ENCODE measurements at regions of chr2 and their contacts with region 1.

Region 1: GRCh38 chr2:112749755-112750559 is 14.5 kb downstream of the CKAP2L start:
- DNase-seq: peak; percentile 75 to 89
- ATAC-seq: peak; percentile 93 to 98 (median 96)
- H3K4me3 ChIP-seq: no peak overlapping the region
- H3K4me3 Mint-ChIP-seq: peak overlapping the region; percentile 46
- H3K27ac ChIP-seq: peak overlapping the region; percentile 1
- H3K27ac Mint-ChIP-seq: peak overlapping the region; percentile 77 to 91
- H3K4me1 ChIP-seq: peaks cover 9% of the 10 kb centered on the region
- H3K4me1 Mint-ChIP-seq: peaks cover 10 to 21% of the 10 kb centered on the region in 2 donors
- H3K27me3 ChIP-seq: no peaks in the 10 kb centered on the region
- H3K27me3 Mint-ChIP-seq: no peaks in the 10 kb centered on the region
- CTCF ChIP-seq: peak; percentile 99

Region 2: DNA sequence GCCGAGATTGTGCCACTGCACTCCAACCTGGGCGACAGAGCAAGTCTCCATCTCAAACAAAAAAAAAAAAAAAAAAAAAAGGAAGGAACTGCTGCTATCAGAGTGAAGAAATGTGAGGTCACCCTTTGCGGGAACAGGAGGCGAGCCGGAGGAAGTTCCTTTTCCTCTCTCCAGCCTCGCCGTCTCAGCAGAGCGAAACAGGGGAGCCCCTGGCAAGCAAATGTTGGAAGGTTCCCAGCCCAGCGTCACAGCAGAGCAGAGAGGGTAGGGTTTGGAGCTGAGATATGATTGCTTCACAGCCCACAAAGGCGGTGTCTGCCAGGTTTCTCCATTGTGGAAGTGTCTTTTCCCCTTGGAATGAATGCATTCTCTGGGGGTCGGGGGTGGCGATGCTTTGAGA is 75.7 kb before region 1 on chr2:
- intact Hi-C with region 1: no loop called
- DNase-seq: no peak
- ATAC-seq: peak in 1 of 3 donors; percentile 66
- H3K4me3 ChIP-seq: no peak overlapping the region
- H3K4me3 Mint-ChIP-seq: no peak overlapping the region
- H3K27ac ChIP-seq: no peak overlapping the region
- H3K27ac Mint-ChIP-seq: peak overlapping the region in 1 of 2 donors; percentile 48
- H3K4me1 ChIP-seq: peaks cover 7% of the 10 kb centered on the region
- H3K4me1 Mint-ChIP-seq: peaks cover 6 to 10% of the 10 kb centered on the region in 2 donors
- H3K27me3 ChIP-seq: no peaks in the 10 kb centered on the region
- H3K27me3 Mint-ChIP-seq: no peaks in the 10 kb centered on the region
- CTCF ChIP-seq: no peak

Region 3: DNA sequence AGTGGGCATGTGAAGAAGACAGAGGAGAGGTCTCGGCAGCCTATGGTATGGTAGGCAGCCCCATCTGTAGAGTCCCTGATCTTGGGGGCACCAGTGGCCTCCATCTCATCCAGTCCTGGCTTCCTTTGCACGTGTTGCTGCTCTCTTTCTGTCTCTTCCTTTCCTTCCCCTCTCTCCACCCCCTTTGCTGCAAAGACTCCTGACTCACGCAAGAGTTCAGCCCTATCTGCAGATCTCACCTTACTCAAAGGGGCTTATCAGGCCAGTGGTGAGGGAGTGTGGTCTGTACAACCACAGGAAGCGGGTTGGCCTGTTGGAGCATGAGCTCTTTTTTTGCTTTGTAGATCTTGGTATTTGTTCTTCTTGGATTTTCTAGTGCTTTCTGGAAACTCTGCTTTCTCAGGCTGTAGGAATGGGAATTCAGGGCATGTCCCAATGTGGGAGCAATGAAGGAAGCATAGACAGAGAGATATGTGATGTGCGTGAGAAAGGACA is 43.7 kb before region 1 on chr2:
- intact Hi-C with region 1: no loop called
- DNase-seq: peak in 1 of 2 donors; percentile 66
- ATAC-seq: peak; percentile 74 to 90 (median 88)
- H3K4me3 ChIP-seq: no peak overlapping the region
- H3K4me3 Mint-ChIP-seq: peak overlapping the region; percentile 42
- H3K27ac ChIP-seq: no peak overlapping the region
- H3K27ac Mint-ChIP-seq: peak overlapping the region in 1 of 2 donors; percentile 37
- H3K4me1 ChIP-seq: peaks cover 44% of the 10 kb centered on the region
- H3K4me1 Mint-ChIP-seq: peaks cover 41 to 58% of the 10 kb centered on the region in 2 donors
- H3K27me3 ChIP-seq: no peaks in the 10 kb centered on the region
- H3K27me3 Mint-ChIP-seq: peaks cover 0 to 2% of the 10 kb centered on the region in 2 donors
- CTCF ChIP-seq: no peak

Region 4: GRCh38 chr2:112884869-112885505 is 135.0 kb after region 1 on chr2:
- intact Hi-C with region 1: loop called (anchors 1 kb)
- DNase-seq: peak; percentile 68 to 78
- ATAC-seq: peak; percentile 61 to 82 (median 75)
- H3K4me3 ChIP-seq: no peak overlapping the region
- H3K4me3 Mint-ChIP-seq: peak overlapping the region; percentile 28
- H3K27ac ChIP-seq: no peak overlapping the region
- H3K27ac Mint-ChIP-seq: peak overlapping the region; percentile 34 to 52
- H3K4me1 ChIP-seq: peaks cover 18% of the 10 kb centered on the region
- H3K4me1 Mint-ChIP-seq: peaks cover 31 to 32% of the 10 kb centered on the region in 2 donors
- H3K27me3 ChIP-seq: no peaks in the 10 kb centered on the region
- H3K27me3 Mint-ChIP-seq: peaks cover 0 to 3% of the 10 kb centered on the region in 2 donors
- CTCF ChIP-seq: peak; percentile 91

Region 5: DNA sequence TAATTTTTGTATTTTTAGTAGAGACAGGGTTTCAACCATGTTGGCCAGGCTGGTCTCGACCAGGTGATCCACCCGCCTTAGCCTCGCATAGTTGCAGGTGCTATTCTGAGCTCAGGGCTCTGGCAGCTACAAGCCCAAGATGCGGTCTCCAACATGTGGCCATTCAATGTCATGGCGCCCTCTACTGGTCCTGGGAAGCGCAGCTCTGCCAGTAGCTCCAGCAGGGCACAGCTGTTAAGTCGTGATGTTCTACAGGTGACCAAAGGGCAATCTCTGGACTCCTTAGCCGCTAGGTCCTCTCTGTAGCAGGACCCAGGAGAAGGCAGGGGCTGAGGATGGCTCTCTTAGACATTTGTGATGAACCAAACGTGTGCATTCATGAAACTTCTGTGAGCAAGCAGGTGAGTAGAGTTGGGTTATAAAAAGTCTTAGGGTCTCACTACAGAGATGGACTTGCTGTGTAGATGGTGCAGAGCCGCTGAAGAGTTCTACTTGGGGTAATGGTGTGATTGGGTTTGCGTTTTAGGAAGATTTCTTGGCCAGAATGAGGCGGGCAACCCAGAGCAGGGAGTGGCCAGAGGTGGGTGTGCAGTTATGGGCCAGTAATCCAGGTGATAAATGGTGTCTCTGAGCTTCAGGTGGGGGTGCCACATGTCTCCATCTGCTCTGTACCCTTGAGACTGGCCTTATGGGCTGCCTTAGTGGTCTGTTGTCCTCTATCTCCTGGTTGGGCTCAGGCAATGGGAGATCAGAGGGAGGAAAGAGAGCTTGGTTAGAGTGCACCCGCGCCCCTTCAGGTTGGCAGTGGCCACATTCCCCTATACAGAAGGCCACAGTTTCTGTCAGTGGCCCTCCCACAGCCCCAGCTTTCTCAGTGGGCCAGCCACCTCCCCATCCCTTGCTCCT is 192.0 kb after region 1 on chr2:
- intact Hi-C with region 1: loop called (anchors 1 kb)
- DNase-seq: peak; percentile 58 to 81
- ATAC-seq: peak; percentile 82 to 95 (median 91)
- H3K4me3 ChIP-seq: no peak overlapping the region
- H3K4me3 Mint-ChIP-seq: no peak overlapping the region
- H3K27ac ChIP-seq: no peak overlapping the region
- H3K27ac Mint-ChIP-seq: no peak overlapping the region
- H3K4me1 ChIP-seq: no peaks in the 10 kb centered on the region
- H3K4me1 Mint-ChIP-seq: peaks cover 6 to 7% of the 10 kb centered on the region in 2 donors
- H3K27me3 ChIP-seq: no peaks in the 10 kb centered on the region
- H3K27me3 Mint-ChIP-seq: peaks cover 3 to 9% of the 10 kb centered on the region in 2 donors
- CTCF ChIP-seq: peak; percentile 79

Region 6: GRCh38 chr2:112958428-112959108 is 208.6 kb after region 1 on chr2:
- intact Hi-C with region 1: loop called (anchors 1 kb)
- DNase-seq: peak in 1 of 2 donors; percentile 79
- ATAC-seq: peak; percentile 84 to 92 (median 85)
- H3K4me3 ChIP-seq: no peak overlapping the region
- H3K4me3 Mint-ChIP-seq: no peak overlapping the region
- H3K27ac ChIP-seq: no peak overlapping the region
- H3K27ac Mint-ChIP-seq: no peak overlapping the region
- H3K4me1 ChIP-seq: no peaks in the 10 kb centered on the region
- H3K4me1 Mint-ChIP-seq: no peaks in the 10 kb centered on the region
- H3K27me3 ChIP-seq: no peaks in the 10 kb centered on the region
- H3K27me3 Mint-ChIP-seq: peaks cover 1 to 6% of the 10 kb centered on the region in 2 donors
- CTCF ChIP-seq: peak; percentile 76